ENCODE measurements at regions of chr2 and their contacts with region 1.

Region 1: DNA sequence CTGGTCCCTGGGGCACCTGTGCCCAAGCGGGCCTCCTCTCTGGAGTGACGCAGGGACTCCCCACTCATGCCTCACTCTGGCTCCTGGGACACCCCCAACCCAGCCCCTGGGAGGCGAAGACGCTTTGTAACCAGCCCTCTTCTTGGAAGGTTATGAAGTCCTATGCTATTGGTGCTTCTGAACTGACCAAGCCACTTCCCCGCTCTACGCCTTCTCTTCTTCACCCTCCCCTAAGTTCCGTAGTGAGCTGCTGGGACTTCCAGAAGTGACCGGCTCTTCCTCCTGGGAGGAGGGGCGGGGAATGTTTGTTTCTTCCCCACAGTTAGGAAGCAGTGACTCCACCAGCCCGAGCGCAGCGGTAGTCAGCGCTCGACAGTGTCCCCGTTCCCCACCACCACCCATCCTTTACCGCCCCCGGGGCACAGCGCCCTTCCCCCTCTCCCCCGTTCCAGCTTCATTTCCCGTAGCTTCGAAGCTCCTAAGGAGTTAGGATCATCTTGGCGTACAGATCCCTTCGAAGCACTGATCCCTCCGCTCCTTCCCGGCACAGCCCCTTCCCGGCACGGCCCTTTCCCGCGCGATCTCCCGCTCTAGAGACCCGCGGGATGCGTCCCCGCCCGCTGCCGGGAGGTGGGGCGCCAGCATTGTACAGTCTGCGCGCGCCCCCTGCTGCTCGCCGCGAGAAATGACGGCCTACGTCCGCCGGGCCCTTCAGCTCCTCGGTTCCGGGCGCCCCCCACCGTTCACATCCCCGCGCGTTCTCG is 25.3 kb upstream of the NOTO start:
- DNase-seq: peak; percentile 92
- ATAC-seq: peak; percentile 72
- H3K4me3 Mint-ChIP-seq: peak overlapping the region; percentile 86
- H3K27ac Mint-ChIP-seq: no peak overlapping the region
- H3K4me1 Mint-ChIP-seq: peaks cover 22% of the 10 kb centered on the region
- H3K27me3 Mint-ChIP-seq: peaks cover 95% of the 10 kb centered on the region
- CTCF ChIP-seq: peak; percentile 83

Region 2: DNA sequence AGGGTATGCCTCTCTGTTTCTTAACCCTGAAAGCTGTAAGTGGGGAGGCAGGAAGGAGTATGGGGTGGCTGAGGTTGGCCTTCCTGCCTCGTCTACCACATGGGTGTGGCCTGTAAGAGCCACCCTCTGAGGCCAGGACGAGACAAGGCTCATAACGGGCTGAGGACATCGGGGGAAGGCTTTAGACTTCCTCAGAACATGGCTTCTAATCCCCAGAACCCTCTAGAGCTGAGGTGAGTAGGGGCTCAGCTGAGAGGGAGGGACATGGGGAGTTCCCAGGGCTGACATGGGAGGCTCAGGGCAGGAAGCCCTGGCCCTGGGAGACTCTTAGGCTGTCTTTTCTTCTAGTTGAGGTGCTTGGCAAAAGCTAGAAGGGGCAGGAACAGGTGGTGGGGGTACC is 223.1 kb before region 1 on chr2:
- CTCF ChIA-PET with region 1: interaction called, 21 read pairs
- POLR2A ChIA-PET with region 1: no interaction called
- DNase-seq: no peak
- ATAC-seq: no peak
- H3K4me3 Mint-ChIP-seq: no peak overlapping the region
- H3K27ac Mint-ChIP-seq: no peak overlapping the region
- H3K4me1 Mint-ChIP-seq: peaks cover 51% of the 10 kb centered on the region
- H3K27me3 Mint-ChIP-seq: no peaks in the 10 kb centered on the region
- CTCF ChIP-seq: no peak

Region 3: GRCh38 chr2:72993147-72993932 is 183.7 kb before region 1 on chr2:
- CTCF ChIA-PET with region 1: interaction called, 46 read pairs
- POLR2A ChIA-PET with region 1: interaction called, 3 read pairs
- DNase-seq: peak; percentile 59
- ATAC-seq: peak; percentile 72
- H3K4me3 Mint-ChIP-seq: no peak overlapping the region
- H3K27ac Mint-ChIP-seq: 0 out of 2 replicates have a peak overlapping the region, but pooled peaks have one; percentile 57
- H3K4me1 Mint-ChIP-seq: peaks cover 11% of the 10 kb centered on the region; the same call in 1 of the 2 replicates
- H3K27me3 Mint-ChIP-seq: no peaks in the 10 kb centered on the region; the same call in 1 of the 2 replicates
- CTCF ChIP-seq: peak; percentile 89

Region 4: DNA sequence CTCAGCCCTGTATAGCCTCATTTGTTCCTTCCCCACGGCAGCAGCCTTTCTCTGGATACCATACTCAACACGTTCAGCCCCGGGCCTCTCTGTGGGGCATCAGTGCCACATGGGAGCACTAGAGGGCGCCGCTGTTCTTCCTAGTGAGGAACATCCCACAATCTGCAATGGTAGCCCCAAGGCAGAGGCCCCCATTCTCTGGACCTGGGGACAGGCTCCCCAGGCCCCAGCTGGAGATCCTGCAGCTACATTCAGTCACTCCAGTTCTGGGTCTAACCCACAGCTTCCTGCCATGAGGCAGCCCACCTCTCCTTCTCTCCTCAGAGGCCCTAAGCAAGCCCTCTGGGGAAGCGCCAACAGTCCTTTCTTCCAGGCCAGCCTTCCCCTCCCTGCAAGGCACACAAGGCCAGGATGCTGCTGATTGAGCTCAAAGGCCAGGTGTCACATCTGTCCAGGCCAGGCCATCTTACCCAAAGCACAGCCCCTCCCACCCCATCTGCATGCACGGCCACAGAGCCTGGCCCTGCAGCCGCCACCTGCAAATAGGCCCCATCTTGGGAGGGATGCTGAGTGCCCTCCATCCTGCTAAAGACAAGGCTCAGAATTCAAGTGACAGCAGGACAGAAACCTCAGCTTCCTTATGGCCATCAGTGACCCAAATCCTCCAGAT is 91.2 kb before region 1 on chr2:
- CTCF ChIA-PET with region 1: interaction called, 88 read pairs
- POLR2A ChIA-PET with region 1: no interaction called
- DNase-seq: peak; percentile 95
- ATAC-seq: peak; percentile 80
- H3K4me3 Mint-ChIP-seq: no peak overlapping the region
- H3K27ac Mint-ChIP-seq: no peak overlapping the region
- H3K4me1 Mint-ChIP-seq: peaks cover 18% of the 10 kb centered on the region
- H3K27me3 Mint-ChIP-seq: no peaks in the 10 kb centered on the region
- CTCF ChIP-seq: peak; percentile 81

Region 5: DNA sequence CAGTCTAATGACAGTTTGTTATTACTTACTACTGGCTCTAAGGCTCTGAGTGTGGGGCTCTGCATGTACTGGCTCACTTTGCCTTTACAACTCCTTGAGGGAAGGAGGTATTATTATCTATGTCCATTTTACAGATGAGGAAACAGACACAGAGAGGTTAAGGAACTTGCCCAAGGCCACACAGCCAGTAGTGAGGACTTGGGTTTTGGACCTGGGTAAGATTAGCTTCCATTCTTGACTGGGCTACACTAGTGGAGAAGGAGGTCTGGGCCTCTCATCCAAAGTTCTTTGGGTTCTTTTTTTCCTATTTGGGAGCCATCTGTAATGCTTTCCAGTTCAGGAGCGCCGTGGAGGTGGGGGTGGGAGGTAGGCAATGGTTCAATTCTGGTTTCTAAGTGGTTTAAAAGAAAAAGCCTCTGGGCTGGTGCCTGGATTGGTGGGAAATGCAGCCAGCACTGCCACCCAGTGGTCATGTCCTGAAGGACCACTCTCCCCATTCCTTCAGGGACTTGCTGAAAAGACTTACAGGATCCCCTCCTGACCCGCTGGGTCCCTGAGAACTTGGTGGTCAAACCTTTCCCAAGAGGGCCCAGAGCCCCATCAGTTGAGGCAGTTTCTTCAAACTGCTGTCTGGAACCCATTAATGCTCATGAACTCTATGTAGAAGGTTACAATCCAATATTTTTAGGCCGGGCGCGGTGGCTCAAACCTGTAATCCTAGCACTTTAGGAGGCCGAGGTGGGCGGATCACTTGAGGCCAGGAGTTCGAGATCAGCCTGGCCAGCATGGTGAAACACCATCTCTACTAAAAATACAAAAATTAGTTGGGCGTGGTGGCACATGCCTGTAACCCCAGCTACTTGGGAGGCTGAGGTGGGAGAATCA is 13.3 kb before region 1 on chr2:
- CTCF ChIA-PET with region 1: interaction called, 11 read pairs
- POLR2A ChIA-PET with region 1: no interaction called
- DNase-seq: peak; percentile 86
- ATAC-seq: peak; percentile 97
- H3K4me3 Mint-ChIP-seq: no peak overlapping the region
- H3K27ac Mint-ChIP-seq: 0 out of 2 replicates have a peak overlapping the region, but pooled peaks have one; percentile 78
- H3K4me1 Mint-ChIP-seq: no peaks in the 10 kb centered on the region
- H3K27me3 Mint-ChIP-seq: peaks cover 11% of the 10 kb centered on the region
- CTCF ChIP-seq: peak; percentile 84

Region 6: DNA sequence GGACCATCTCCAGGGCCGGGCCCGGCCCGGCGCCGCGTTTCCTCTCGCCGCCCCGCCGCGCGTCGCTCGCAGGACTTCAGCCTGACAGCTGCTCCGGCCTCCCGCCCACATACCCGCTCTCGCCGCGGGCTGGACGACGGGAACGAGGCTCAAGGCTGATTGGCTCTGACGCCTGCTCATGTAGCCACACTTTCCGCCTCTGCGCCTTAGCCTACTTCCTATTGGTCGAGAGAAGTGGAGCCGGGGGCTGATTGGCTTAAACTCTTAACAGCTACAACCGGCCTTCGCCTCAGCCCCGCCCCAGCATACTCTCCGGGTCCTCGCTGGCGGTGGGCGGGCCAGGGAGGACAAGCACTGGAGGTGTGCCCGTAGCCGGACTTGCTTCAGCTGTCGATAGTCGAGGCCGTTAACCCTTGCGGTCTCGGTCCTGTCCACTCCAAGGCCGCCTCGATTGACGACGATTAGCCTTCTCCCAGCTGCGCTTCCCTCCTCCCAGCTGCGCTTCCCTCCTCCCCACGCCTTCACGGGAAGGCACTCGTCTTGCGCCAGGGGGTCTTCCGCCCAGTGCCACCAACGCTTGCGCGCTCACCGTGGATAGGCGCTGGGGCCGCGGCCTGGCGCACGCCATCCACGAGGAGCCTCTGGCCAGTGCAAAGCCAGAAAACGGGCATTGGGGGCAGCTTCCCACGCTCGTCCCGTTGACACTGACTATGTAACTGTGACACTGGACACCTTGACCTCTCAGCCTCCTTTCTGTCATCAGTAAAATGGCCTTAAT is 56.3 kb after region 1 on chr2 and contains the start of gene PRADC1:
- CTCF ChIA-PET with region 1: interaction called, 19 read pairs
- POLR2A ChIA-PET with region 1: interaction called, 3 read pairs
- DNase-seq: peak; percentile 98
- ATAC-seq: peak; percentile 93
- H3K4me3 Mint-ChIP-seq: peak within 1 kb of the TSS; percentile 100
- H3K27ac Mint-ChIP-seq: peak within 1 kb of the TSS; percentile 90
- H3K4me1 Mint-ChIP-seq: peaks cover 29% of the 10 kb centered on the region
- H3K27me3 Mint-ChIP-seq: no peaks in the 10 kb centered on the region; the same call in 1 of the 2 replicates
- CTCF ChIP-seq: no peak
- total RNA-seq, gene PRADC1: 11.4 to 12.9 TPM (median 12.2 TPM) in 3 replicates